ENCODE measurements at regions of chr14 and their contacts with region 1.

Region 1: GRCh38 chr14:103715052-103716000 is at the starts of genes XRCC3 and ZFYVE21:
- DNase-seq: peak; percentile 100
- ATAC-seq: peak; percentile 96
- H3K4me3 Mint-ChIP-seq: peak within 1 kb of the TSS; percentile 81
- H3K27ac Mint-ChIP-seq: peak within 1 kb of the TSS; percentile 60
- H3K4me1 Mint-ChIP-seq: peaks cover 49% of the 10 kb centered on the region
- H3K27me3 Mint-ChIP-seq: no peaks in the 10 kb centered on the region
- total RNA-seq, gene XRCC3: 43.7 to 46.9 TPM
- total RNA-seq, gene ZFYVE21: 10.1 to 12.7 TPM

Region 2: DNA sequence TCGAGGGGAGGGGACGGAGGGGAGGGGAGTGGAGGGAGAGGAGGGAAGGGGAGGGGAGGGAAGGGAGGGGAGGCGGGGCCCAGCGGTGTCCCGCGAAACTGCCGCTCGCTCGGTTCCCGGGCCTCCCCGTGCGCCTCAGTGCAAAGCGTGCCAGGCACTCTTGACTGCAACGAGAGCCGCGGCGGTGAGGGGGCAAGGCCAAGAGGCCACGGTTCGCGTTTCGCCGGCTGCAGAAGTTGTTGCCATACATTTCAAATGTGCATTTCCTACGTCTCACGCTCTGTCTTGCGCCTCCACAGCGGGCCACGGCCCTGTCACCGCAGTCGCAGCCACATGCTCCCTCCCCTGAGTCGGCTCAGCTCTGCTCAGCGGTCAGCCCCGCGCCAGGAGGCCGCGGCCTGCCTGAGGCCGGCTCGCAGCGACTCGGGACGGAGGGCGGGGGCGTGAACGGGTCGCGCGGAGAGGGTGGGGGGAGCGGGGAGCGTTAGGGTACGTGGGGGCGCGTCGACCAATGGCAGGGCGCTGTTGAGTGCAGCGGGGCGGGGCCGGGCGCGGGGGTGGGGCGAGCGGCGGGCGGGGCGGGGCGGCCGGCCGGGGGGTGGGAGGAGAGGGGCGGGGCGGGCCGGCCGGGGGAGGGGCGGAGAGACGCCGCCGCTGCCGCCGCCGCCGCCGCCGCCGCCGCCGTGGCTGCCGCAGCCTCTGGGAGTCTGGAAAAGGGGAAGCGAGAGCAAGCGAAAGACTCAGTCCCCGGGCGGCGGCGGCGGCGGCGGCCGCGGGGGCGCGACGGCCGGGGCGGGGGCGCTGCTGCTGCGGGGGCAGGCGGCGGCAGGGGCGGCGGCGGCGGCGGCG is 1954.1 kb before region 1 on chr14 and contains the start of gene PPP2R5C:
- CTCF ChIA-PET with region 1: no interaction called
- POLR2A ChIA-PET with region 1: no interaction called
- intact Hi-C with region 1: loop called in 1 of 2 experiments (anchors 5 kb)
- DNase-seq: peak; percentile 94
- ATAC-seq: peak; percentile 65
- H3K4me3 Mint-ChIP-seq: peak within 1 kb of the TSS; percentile 85
- H3K27ac Mint-ChIP-seq: peak within 1 kb of the TSS; percentile 78
- H3K4me1 Mint-ChIP-seq: peaks cover 43% of the 10 kb centered on the region
- H3K27me3 Mint-ChIP-seq: no peaks in the 10 kb centered on the region
- total RNA-seq, gene PPP2R5C: 232 to 281 TPM

Region 3: GRCh38 chr14:103520657-103521437 is 194.5 kb before region 1 on chr14:
- CTCF ChIA-PET with region 1: no interaction called
- POLR2A ChIA-PET with region 1: no interaction called
- intact Hi-C with region 1: loop called in 1 of 2 experiments (anchors 1 kb)
- DNase-seq: peak; percentile 74
- ATAC-seq: peak; percentile 45
- H3K4me3 Mint-ChIP-seq: peak overlapping the region; percentile 39
- H3K27ac Mint-ChIP-seq: no peak overlapping the region
- H3K4me1 Mint-ChIP-seq: peaks cover 10% of the 10 kb centered on the region
- H3K27me3 Mint-ChIP-seq: peaks cover 12% of the 10 kb centered on the region

Region 4: GRCh38 chr14:103562429-103563225 is 152.7 kb before region 1 on chr14 and contains the starts of genes BAG5 and COA8:
- CTCF ChIA-PET with region 1: interaction called, 4 read pairs
- POLR2A ChIA-PET with region 1: no interaction called
- intact Hi-C with region 1: loop called in 1 of 2 experiments (anchors 1 kb)
- DNase-seq: peak; percentile 93
- ATAC-seq: peak; percentile 78
- H3K4me3 Mint-ChIP-seq: peak within 1 kb of the TSS; percentile 94
- H3K27ac Mint-ChIP-seq: peak within 1 kb of the TSS; percentile 91
- H3K4me1 Mint-ChIP-seq: peaks cover 61% of the 10 kb centered on the region
- H3K27me3 Mint-ChIP-seq: no peaks in the 10 kb centered on the region
- total RNA-seq, gene BAG5: 24.2 to 25.1 TPM
- total RNA-seq, gene COA8: 39.6 to 41.7 TPM

Region 5: DNA sequence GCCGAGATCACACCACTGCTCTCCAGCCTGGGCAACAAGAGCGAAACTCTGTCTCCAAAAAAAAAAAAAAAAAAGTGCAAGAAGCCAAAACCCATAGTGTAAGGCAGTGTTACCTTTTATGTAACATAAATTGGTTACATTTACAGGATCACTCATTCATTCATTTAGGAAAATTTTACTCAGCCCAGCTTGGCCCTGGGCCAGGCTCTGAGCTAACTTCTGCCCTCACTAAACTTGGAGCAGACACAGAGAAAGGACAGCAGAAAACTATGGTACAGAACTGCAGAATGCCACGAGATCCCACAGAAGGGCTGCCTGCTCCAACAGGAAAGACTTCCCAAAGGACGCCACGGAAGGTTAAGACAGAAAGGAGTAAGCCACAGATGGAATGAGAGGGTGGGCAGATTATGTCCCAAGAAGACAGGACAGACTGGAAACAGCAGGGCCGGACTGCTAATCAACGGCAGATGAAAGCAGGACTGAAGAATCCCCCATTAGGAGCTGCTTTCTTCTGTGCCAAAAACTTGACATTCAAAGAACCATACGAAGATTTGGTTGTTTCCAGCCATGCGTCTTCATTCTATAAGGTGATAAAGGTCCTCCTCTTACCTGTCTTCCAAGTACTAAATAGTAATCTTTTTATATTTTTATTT is 113.1 kb after region 1 on chr14:
- CTCF ChIA-PET with region 1: no interaction called
- POLR2A ChIA-PET with region 1: no interaction called
- intact Hi-C with region 1: no loop called
- DNase-seq: peak; percentile 61
- ATAC-seq: peak; percentile 47
- H3K4me3 Mint-ChIP-seq: no peak overlapping the region
- H3K27ac Mint-ChIP-seq: no peak overlapping the region
- H3K4me1 Mint-ChIP-seq: peaks cover 9% of the 10 kb centered on the region
- H3K27me3 Mint-ChIP-seq: no peaks in the 10 kb centered on the region

Region 6: DNA sequence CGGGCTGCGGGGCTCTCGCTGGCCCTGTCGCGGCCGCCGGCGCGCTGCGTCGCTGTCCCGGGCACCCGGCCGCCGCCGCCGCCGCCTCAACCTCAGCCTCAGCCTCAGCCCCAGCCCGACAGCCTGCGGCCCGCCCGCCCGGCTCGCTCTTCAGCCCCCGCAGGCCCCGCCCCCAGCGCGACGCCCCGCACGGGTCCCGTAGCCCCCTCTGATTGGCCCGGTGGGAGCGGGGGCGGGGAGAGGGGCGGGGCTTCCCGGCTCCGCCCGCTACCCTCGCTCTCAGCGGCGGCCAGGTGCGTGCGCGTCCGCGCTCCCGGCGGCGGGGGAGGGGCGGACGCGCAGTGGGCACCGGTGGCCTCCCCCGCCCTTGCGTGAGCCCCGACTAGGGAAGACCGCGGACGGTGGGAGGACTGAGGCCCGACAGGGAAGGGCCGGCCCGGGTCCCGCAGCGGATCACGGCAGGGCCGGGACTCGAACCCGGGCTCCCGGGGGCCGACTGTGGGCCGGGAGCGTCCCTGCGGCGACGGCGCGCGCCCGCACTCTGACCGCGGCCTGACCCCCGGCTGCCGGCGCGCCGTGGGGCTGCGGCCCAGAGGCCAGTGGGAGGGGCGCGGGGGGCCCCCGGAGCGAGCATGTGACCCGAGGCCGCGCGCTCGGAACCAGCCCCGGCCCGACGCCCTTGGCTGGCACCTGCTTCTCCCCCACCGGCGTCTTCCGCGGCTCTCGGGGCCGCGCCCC is 132.3 kb after region 1 on chr14 and contains the start of gene PPP1R13B:
- CTCF ChIA-PET with region 1: no interaction called
- POLR2A ChIA-PET with region 1: no interaction called
- intact Hi-C with region 1: loop called in 1 of 2 experiments (anchors 1 kb)
- DNase-seq: peak; percentile 97
- ATAC-seq: peak; percentile 98
- H3K4me3 Mint-ChIP-seq: peak within 1 kb of the TSS; percentile 76
- H3K27ac Mint-ChIP-seq: peak within 1 kb of the TSS; percentile 38
- H3K4me1 Mint-ChIP-seq: peaks cover 16% of the 10 kb centered on the region
- H3K27me3 Mint-ChIP-seq: peaks cover 5% of the 10 kb centered on the region
- total RNA-seq, gene PPP1R13B: 9.3 to 10.3 TPM

Region 7: DNA sequence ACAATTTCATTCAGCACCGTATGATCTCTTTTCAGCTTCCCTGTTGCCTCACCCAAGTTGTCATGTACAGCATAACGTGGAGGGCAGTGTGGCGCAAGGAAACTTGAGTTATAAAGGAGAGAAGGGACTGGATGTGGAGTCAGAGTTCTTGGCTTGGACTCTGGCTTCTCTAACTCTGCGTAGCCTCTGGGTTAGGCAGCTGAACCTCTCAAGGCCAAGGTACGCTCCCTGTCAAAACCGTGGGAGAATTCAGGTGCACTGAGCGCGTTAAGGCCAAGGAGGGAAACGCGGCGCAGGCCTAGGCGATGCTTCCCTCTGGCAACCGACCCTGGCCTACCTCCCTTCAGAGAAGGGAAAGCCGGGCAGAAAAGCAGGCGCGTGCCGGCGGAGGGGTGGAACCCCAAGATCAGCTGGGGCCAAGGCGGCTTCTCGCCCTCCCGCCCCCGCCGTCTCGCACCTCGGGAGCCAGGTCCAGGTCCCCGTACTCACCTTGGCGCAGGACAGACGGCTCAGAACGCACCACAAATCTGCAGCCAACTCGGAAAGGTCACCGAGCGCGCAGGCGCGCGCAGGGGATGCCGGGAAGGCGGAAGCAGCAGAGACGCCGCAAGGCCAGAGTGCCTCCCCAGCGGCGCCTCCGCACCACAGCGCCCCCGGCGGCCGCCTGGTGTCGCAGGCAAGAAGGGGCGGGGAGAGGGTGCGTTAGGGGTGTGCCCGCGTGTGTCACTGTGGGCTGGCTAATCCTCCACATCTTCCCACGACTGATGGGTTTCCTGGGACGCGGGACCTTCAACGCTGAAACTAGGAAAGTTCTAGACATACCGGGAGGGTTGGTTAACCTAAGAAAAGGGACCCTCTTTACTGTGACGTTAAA is 205.9 kb after region 1 on chr14:
- CTCF ChIA-PET with region 1: interaction called, 3 read pairs
- POLR2A ChIA-PET with region 1: no interaction called
- intact Hi-C with region 1: loop called in 1 of 2 experiments (anchors 1 kb)
- DNase-seq: peak; percentile 97
- ATAC-seq: peak; percentile 99
- H3K4me3 Mint-ChIP-seq: peak overlapping the region; percentile 85
- H3K27ac Mint-ChIP-seq: peak overlapping the region; percentile 80
- H3K4me1 Mint-ChIP-seq: peaks cover 12% of the 10 kb centered on the region
- H3K27me3 Mint-ChIP-seq: peaks cover 6% of the 10 kb centered on the region